ENCODE measurements at regions of chr5 and their contacts with region 1.

Region 1: DNA sequence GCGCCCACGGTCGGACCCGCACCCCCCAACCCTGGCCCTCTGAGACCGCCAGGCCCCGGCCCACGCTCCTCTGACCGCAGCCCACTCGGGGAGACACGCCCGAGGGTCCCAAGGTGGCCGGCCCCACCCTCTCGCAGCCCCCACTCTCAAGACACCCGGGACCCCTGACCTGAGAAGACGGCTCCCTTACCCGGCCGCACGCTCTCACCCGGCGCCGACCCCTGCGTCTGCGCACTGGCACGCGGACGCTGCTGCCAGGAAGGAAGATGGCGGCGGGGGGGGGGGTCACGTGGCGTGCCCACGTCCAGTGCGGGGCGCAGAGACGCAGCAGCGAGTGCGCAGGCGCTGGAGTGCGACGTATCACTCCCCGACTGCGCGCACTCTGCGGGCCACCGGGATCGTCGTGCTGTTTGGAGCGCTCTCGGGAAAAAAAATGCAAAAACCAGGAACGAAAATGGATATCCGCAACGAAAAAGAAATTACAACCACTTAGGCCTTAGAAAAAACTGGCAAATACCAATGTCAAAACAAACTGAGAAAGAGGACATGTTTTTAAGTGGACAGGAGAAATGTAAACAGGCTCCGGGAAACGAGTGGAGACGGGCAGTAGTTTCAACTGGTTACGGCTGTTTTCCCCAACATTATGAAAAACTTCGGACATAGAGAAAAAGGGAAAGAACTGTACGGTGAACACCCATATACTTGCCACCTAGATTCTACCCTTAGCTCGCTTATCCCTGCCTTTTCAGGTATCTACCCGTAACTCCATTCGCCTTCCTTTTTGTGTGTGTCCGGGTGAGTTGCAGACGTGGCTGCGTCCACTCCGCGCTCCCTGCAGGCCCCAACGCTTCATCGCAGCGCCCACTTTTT is at the start of gene MRPL36:
- DNase-seq: peak; percentile 84
- H3K4me3 Mint-ChIP-seq: peak within 1 kb of the TSS; percentile 98
- H3K27ac Mint-ChIP-seq: peak within 1 kb of the TSS; percentile 96
- H3K4me1 Mint-ChIP-seq: peaks cover 62% of the 10 kb centered on the region
- H3K27me3 Mint-ChIP-seq: no peaks in the 10 kb centered on the region
- total RNA-seq, gene MRPL36: 109 and 118 TPM in 2 replicates

Region 2: GRCh38 chr5:892394-893136 is 907.3 kb before region 1 on chr5 and contains the starts of genes BRD9 and TRIP13:
- intact Hi-C with region 1: loop called (anchors 10 kb)
- DNase-seq: peak; percentile 84
- H3K4me3 Mint-ChIP-seq: peak within 1 kb of the TSS; percentile 92
- H3K27ac Mint-ChIP-seq: peak within 1 kb of the TSS; percentile 90
- H3K4me1 Mint-ChIP-seq: peaks cover 26% of the 10 kb centered on the region
- H3K27me3 Mint-ChIP-seq: no peaks in the 10 kb centered on the region
- total RNA-seq, gene BRD9: 77.8 and 81.6 TPM in 2 replicates
- total RNA-seq, gene TRIP13: 37.2 and 38.4 TPM in 2 replicates

Region 3: GRCh38 chr5:1344975-1345838 is 454.6 kb before region 1 on chr5 and contains the start of gene CLPTM1L:
- intact Hi-C with region 1: loop called (anchors 10 kb)
- DNase-seq: peak; percentile 87
- H3K4me3 Mint-ChIP-seq: peak within 1 kb of the TSS; percentile 90
- H3K27ac Mint-ChIP-seq: peak within 1 kb of the TSS; percentile 89
- H3K4me1 Mint-ChIP-seq: peaks cover 29% of the 10 kb centered on the region
- H3K27me3 Mint-ChIP-seq: no peaks in the 10 kb centered on the region
- total RNA-seq, gene CLPTM1L: 132 and 133 TPM in 2 replicates

Region 4: GRCh38 chr5:1568201-1568979 is 231.4 kb before region 1 on chr5:
- intact Hi-C with region 1: no loop called
- DNase-seq: no peak
- H3K4me3 Mint-ChIP-seq: no peak overlapping the region
- H3K27ac Mint-ChIP-seq: no peak overlapping the region
- H3K4me1 Mint-ChIP-seq: no peaks in the 10 kb centered on the region
- H3K27me3 Mint-ChIP-seq: no peaks in the 10 kb centered on the region

Region 5: GRCh38 chr5:1644810-1645571 is 154.8 kb before region 1 on chr5:
- intact Hi-C with region 1: no loop called
- DNase-seq: peak; percentile 63
- H3K4me3 Mint-ChIP-seq: no peak overlapping the region
- H3K27ac Mint-ChIP-seq: no peak overlapping the region
- H3K4me1 Mint-ChIP-seq: peaks cover 8% of the 10 kb centered on the region
- H3K27me3 Mint-ChIP-seq: peaks cover 42% of the 10 kb centered on the region

Region 6: DNA sequence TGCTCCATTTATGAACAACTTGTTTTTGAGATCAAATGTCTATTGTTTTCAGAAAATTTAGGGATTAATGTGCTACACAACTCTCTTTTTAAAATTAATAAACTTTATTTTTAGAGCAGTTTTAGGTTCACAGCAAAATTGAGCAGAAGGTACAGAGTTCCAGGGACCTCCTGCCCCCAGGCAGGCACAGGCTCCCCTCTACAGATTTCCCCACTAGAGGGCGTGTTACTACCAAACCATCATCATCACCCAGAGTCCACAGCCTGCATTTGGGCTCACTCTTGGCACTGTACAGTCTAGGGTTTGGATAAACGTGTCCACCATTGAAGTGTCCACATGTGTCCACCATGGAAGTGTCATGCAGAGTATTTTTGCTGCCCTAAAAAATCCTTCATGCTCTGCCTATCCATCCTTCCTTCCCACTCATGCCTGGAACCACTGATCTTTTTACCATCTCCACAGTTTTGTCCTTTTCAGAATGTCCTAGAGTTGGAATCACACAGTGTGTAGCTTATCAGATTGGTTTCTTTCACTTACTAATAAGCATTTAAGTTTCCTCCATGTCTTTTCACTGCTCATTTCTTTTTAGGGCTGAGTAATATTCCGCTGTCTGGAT is 61.9 kb before region 1 on chr5:
- intact Hi-C with region 1: loop called (anchors 1 kb)
- DNase-seq: peak; percentile 21
- H3K4me3 Mint-ChIP-seq: no peak overlapping the region
- H3K27ac Mint-ChIP-seq: no peak overlapping the region
- H3K4me1 Mint-ChIP-seq: no peaks in the 10 kb centered on the region
- H3K27me3 Mint-ChIP-seq: peaks cover 27% of the 10 kb centered on the region

Region 7: DNA sequence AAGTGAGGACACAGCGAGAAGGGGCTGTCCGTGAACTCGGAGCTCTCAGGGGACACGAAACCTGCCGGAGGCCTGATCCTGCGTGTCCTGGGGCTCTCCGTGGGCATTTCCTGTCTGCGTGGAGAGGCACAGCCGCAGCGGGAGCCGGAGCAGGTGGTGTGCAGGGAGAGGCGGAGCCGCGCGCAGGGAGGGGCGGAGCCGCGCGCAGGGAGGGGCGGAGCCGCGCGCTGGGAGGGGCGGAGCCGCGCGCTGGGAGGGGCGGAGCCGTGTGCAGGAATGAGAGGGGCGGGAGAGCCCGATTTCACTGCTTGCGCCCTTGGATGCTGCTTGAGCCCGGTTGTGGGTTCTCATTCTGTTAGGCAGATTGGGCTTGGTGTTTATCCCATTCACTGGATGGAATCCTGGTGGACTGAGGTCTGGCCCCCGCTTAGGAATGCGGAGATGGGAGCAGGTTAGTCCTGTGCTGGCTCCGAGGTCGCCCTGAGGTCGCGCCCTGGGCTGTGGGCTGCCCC is 28.1 kb after region 1 on chr5:
- intact Hi-C with region 1: loop called (anchors 2 kb)
- DNase-seq: no peak
- H3K4me3 Mint-ChIP-seq: no peak overlapping the region
- H3K27ac Mint-ChIP-seq: no peak overlapping the region
- H3K4me1 Mint-ChIP-seq: no peaks in the 10 kb centered on the region
- H3K27me3 Mint-ChIP-seq: no peaks in the 10 kb centered on the region

Measured in activated T-helper 1 cell treated with anti-CD3 and anti-CD28 coated beads, Interleukin-12 subunit alpha, Interleukin-12 subunit beta, Interleukin-2, Interleukin-4 antibody, amounts not matched to agents 30 ng/mL and 10 ng/mL and 1 ng/mL, durations not matched to agents 14 hours and 24 hours and 36 hours (primary cell).